ENCODE measurements at regions of chr7 and their contacts with region 1.

Region 1: DNA sequence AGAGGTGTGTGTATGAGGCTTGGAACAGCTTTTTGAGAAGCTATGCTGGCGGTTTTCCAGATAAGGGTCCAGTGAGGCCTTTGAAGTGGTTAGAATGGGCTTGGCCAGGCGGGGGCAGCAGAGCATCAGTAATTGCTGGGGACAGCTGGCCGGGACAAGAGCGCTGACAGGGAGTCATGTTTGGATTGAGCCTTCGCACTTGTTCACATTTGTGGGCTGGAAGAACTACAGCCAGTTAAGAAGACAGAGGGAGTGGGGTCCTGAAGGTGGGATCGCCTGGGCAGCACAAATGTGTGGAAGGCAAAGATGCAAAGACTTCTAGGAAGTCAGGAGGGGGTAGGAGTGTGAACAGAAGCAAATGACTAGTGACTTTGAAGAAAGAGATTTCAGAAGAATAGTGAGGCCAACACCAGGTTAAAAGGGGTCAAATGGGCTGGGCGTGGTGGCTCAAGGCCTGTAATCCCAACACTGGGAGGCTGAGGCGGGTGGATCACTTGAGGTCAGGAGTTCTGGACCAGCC is 12.7 kb upstream of the SDHAF3 start:
- DNase-seq: peak; percentile 95
- H3K4me3 ChIP-seq: no peak overlapping the region
- H3K27ac ChIP-seq: no peak overlapping the region
- H3K4me1 ChIP-seq: peaks cover 0 to 8% (median 5%) of the 10 kb centered on the region in 4 donors
- H3K27me3 ChIP-seq: no peaks in the 10 kb centered on the region
- CTCF ChIP-seq: peak; percentile 70 to 79 (median 77)
- EP300 ChIP-seq: no peak
- POLR2A ChIP-seq: no peak

Region 2: DNA sequence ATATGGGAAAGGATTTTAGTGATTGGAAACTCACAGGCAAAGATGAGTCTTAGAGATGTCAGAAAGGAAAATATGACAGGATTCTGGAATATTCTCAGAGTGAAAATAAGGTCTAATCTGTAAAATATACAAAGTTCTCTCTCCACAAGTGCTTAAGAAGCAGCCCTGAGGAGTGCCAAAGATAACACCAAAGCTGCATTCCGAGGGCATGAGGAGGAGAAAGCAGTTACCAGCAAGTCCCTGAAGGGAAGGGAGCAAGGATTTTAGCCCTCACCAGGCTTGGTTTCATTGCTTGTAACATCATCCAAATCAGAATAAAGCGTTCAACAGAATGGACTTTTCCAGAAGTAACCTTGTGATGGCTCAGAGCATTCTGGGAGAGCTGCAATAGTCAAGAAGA is 130.8 kb before region 1 on chr7:
- intact Hi-C with region 1: no loop called
- DNase-seq: no peak
- H3K4me3 ChIP-seq: no peak overlapping the region
- H3K27ac ChIP-seq: no peak overlapping the region
- H3K4me1 ChIP-seq: no peaks in the 10 kb centered on the region
- H3K27me3 ChIP-seq: peaks cover 0 to 29% (median 0%) of the 10 kb centered on the region in 4 donors
- CTCF ChIP-seq: no peak
- EP300 ChIP-seq: no peak
- POLR2A ChIP-seq: no peak

Region 3: GRCh38 chr7:97064967-97065587 is 39.7 kb before region 1 on chr7:
- intact Hi-C with region 1: no loop called
- DNase-seq: no peak
- H3K4me3 ChIP-seq: no peak overlapping the region
- H3K27ac ChIP-seq: no peak overlapping the region
- H3K4me1 ChIP-seq: no peaks in the 10 kb centered on the region
- H3K27me3 ChIP-seq: peaks cover 0 to 3% (median 0%) of the 10 kb centered on the region in 4 donors
- CTCF ChIP-seq: peak; percentile 45 to 68 (median 54)
- EP300 ChIP-seq: no peak
- POLR2A ChIP-seq: no peak

Region 4: GRCh38 chr7:97179454-97180104 is 74.8 kb after region 1 on chr7:
- intact Hi-C with region 1: loop called (anchors 2 kb)
- DNase-seq: no peak
- H3K4me3 ChIP-seq: no peak overlapping the region
- H3K27ac ChIP-seq: no peak overlapping the region
- H3K4me1 ChIP-seq: peaks cover 0 to 2% (median 0%) of the 10 kb centered on the region in 4 donors
- H3K27me3 ChIP-seq: no peaks in the 10 kb centered on the region
- CTCF ChIP-seq: peak; percentile 61 to 78 (median 77)
- EP300 ChIP-seq: no peak
- POLR2A ChIP-seq: no peak

Region 5: DNA sequence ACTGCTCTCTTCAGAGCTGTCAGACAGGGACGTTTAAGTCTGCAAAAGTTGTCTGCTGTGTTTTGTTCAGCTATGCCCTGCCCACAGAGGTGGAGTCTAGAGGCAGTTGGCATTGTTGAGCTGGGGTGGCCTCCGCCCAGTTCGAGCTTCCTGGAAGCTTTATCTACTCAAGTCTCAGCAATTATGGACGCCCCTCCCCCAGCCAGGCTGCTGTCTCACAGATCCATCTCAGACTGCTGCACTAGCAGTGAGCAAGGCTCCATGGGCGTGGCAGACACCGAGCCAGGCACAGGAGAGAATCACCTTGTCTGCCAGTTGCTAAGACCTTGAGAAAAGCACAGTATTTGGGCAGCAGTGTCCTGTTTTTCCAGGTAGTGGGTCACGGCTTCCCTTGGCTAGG is 110.8 kb after region 1 on chr7:
- intact Hi-C with region 1: no loop called
- DNase-seq: no peak
- H3K4me3 ChIP-seq: no peak overlapping the region
- H3K27ac ChIP-seq: no peak overlapping the region
- H3K4me1 ChIP-seq: no peaks in the 10 kb centered on the region
- H3K27me3 ChIP-seq: no peaks in the 10 kb centered on the region
- CTCF ChIP-seq: no peak
- EP300 ChIP-seq: no peak
- POLR2A ChIP-seq: no peak

Region 6: GRCh38 chr7:97835296-97836138 is 730.7 kb after region 1 on chr7:
- intact Hi-C with region 1: loop called (anchors 10 kb)
- DNase-seq: no peak
- H3K4me3 ChIP-seq: no peak overlapping the region
- H3K27ac ChIP-seq: no peak overlapping the region
- H3K4me1 ChIP-seq: no peaks in the 10 kb centered on the region
- H3K27me3 ChIP-seq: peaks cover 0 to 19% (median 3%) of the 10 kb centered on the region in 4 donors
- CTCF ChIP-seq: peak; percentile 49 to 65 (median 60)
- EP300 ChIP-seq: no peak
- POLR2A ChIP-seq: no peak

Measured in esophagus muscularis mucosa (tissue), 4 donors.